Posterior vena cava (tissue), 2 donors: ENCODE measurements at regions of chr17 and their contacts with region 1.

Region 1: DNA sequence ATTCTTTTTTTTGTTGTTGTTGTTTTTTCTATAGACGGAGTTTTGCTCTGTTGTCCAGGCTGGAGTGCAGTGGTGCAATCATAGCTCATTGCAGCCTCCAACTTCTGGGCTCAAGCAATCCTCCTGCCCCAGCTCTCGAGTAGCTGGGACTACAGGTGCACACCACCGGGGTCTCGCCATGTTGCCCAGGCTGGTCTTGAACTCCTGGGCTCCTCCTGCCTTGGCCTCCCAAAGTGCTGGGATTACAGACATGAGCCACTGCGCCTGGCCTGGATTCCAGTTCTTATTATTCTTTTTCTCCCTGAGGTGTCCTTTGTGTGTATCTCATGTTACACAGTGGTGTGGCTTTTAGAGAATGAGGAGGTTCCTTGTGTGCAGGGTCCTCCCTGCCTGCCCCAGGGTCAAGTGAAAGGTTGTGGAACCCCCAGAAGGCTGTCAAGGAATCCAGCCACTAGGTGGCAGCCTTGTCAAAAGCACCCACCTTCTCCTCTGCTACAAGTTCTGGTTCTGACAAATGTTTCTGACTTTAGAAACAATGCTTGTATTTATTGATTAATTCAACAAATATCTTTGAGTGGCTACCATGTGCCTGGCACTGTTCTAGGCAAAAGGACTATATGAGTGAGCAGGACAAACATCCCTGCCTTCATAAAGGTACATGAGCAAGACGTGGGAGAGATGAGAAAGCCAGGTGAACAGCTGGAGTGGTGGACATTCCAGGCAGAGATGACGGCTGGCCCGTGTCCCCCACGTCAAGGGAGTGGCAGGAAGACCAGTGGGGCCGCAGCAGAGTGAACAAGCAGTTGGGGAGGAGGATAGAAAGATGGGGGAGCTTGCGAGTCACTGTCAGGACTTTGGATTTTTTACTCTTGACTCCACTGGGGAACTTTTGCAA is 112.4 kb downstream of the SPECC1 start:
- DNase-seq: peak; percentile 84

Region 2: GRCh38 chr17:19992803-19993713 is 128.5 kb before region 1 on chr17:
- intact Hi-C with region 1: loop called in 1 of 2 experiments (anchors 2 kb)
- DNase-seq: peak; percentile 95

Region 3: GRCh38 chr17:20009302-20010098 is 112.1 kb before region 1 on chr17 and contains the start of gene SPECC1:
- intact Hi-C with region 1: loop called (anchors 5 kb)
- DNase-seq: peak; percentile 94
- total RNA-seq, gene SPECC1: 44.7 to 59.1 TPM

Region 4: DNA sequence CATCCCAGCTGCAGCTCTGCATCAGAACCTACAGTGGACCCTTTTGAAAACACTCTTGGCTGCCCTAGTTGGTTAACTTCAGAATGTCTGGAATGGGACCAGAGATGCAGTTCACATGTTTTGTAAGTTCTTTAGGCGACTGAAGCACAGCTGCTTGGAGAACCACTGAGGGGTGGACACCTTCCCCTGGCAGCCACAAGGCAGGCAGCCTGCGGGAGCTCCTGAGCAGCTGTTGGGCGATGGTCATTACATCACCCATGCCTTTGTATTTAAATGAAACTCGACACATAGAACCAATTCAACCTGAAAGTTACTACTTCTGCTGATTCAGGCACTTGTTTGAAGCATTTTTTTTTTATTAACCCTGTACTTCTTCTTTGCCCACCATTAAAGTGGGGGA is 194.2 kb after region 1 on chr17:
- intact Hi-C with region 1: loop called in 1 of 2 experiments (anchors 10 kb)
- DNase-seq: no peak